ENCODE measurements at regions of chr15 and their contacts with region 1.

Region 1: GRCh38 chr15:60580650-60581376 is 101.9 kb upstream of the ICE2 start:
- DNase-seq: peak in 6 of 9 experiments; percentile 33 to 91 (median 60)
- ATAC-seq: peak; percentile 74
- H3K4me3 ChIP-seq: peak overlapping the region; percentile 18 to 21
- H3K4me3 Mint-ChIP-seq: peak overlapping the region; percentile 74
- H3K27ac ChIP-seq: peak overlapping the region; percentile 35 to 85
- H3K27ac Mint-ChIP-seq: peak overlapping the region; percentile 95
- H3K4me1 ChIP-seq: peaks cover 91% of the 10 kb centered on the region
- H3K4me1 Mint-ChIP-seq: peaks cover 92% of the 10 kb centered on the region
- H3K27me3 ChIP-seq: no peaks in the 10 kb centered on the region
- H3K27me3 Mint-ChIP-seq: no peaks in the 10 kb centered on the region
- CTCF ChIP-seq: no peak

Region 2: GRCh38 chr15:60478566-60479360 is 102.0 kb before region 1 on chr15 and contains the start of gene ICE2:
- CTCF ChIA-PET with region 1: no interaction called
- POLR2A ChIA-PET with region 1: interaction called, 5 read pairs
- intact Hi-C with region 1: loop called in 1 of 2 experiments (anchors 2 kb)
- DNase-seq: peak; percentile 88 to 98 (median 96)
- ATAC-seq: peak; percentile 90
- H3K4me3 ChIP-seq: peak within 1 kb of the TSS; percentile 68 to 89
- H3K4me3 Mint-ChIP-seq: peak within 1 kb of the TSS; percentile 98
- H3K27ac ChIP-seq: peak within 1 kb of the TSS; percentile 85 to 92
- H3K27ac Mint-ChIP-seq: peak within 1 kb of the TSS; percentile 100
- H3K4me1 ChIP-seq: peaks cover 39% of the 10 kb centered on the region
- H3K4me1 Mint-ChIP-seq: peaks cover 72% of the 10 kb centered on the region
- H3K27me3 ChIP-seq: no peaks in the 10 kb centered on the region
- H3K27me3 Mint-ChIP-seq: no peaks in the 10 kb centered on the region
- CTCF ChIP-seq: no peak
- total RNA-seq, gene ICE2: 13.9 to 18.3 TPM

Region 3: DNA sequence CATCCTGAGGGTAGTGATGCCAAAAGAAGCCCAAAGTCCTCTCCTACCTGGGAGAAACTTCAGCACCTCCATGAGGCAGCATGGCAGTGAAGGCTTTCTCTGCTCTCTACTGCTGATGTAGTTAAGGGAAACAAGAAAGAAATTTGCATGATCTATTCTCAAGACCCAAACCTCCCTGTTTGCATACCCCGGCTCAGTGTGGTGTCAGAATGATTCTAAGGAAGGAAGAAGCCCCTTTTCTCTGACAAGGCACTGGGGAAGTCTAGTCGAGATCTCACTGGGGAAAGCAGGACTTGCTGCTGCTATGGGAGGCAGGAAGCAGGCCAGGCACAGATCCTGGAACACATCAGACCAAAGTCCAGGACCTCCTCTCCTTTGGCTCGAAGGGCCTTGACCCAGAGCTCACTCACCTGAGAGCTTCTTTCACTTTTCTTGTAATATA is 12.5 kb before region 1 on chr15:
- CTCF ChIA-PET with region 1: interaction called, 36 read pairs
- POLR2A ChIA-PET with region 1: interaction called, 23 read pairs
- intact Hi-C with region 1: loop called in 1 of 2 experiments (anchors 1 kb)
- DNase-seq: peak in 1 of 9 experiments; percentile 41
- ATAC-seq: no peak
- H3K4me3 ChIP-seq: no peak overlapping the region
- H3K4me3 Mint-ChIP-seq: peak overlapping the region; percentile 27
- H3K27ac ChIP-seq: peak overlapping the region in 1 of 2 experiments; percentile 68
- H3K27ac Mint-ChIP-seq: peak overlapping the region; percentile 80
- H3K4me1 ChIP-seq: peaks cover 93% of the 10 kb centered on the region
- H3K4me1 Mint-ChIP-seq: peaks cover 93% of the 10 kb centered on the region
- H3K27me3 ChIP-seq: no peaks in the 10 kb centered on the region
- H3K27me3 Mint-ChIP-seq: no peaks in the 10 kb centered on the region
- CTCF ChIP-seq: no peak